ENCODE measurements at regions of chr9 and their contacts with region 1.

Region 1: DNA sequence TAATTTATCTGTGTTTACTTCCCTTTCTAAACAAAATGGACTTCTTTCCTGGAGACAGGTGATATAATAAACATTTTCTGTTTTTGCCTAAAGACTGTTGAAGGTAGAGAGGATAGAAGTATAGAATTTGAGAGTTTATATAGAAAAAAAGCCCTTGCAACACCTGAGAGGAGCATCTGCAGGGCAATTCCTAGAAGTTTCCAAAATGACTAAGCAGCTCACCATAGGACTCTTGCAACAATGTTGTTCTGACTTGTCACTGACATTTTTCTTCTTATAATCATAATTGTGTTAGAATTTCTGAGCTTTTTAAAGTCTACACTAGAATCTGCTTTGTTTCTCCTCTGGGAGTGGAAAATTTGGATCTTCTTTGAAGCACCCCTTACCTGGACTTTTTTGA is 216.8 kb downstream of the TUSC1 start:
- DNase-seq: no peak
- ATAC-seq: no peak
- H3K4me3 ChIP-seq: no peak overlapping the region
- H3K4me3 Mint-ChIP-seq: no peak overlapping the region
- H3K27ac ChIP-seq: no peak overlapping the region
- H3K27ac Mint-ChIP-seq: no peak overlapping the region
- H3K4me1 ChIP-seq: no peaks in the 10 kb centered on the region
- H3K4me1 Mint-ChIP-seq: no peaks in the 10 kb centered on the region
- H3K27me3 ChIP-seq: no peaks in the 10 kb centered on the region
- H3K27me3 Mint-ChIP-seq: no peaks in the 10 kb centered on the region

Region 2: DNA sequence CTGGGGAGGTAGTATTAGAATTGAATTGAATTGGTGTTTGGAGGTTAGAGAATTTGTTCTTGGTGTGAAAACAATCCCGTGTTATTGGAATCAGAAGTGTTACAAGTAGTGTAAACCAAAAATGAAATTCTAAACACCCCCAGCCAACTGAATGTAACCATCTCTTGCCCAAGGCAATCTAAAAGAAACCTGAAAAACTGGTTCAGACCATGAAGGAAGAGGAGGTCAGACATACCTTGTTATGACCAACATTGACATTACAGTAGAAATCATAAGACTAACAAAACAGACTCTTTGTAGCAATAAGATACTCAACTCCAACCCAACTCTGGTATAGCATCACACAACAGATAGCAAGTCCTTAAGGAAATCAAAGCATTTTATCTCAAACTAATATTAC is 57.9 kb after region 1 on chr9:
- CTCF ChIA-PET with region 1: no interaction called
- POLR2A ChIA-PET with region 1: no interaction called
- intact Hi-C with region 1: loop called in 1 of 2 experiments (anchors 10 kb)
- DNase-seq: no peak
- ATAC-seq: no peak
- H3K4me3 ChIP-seq: no peak overlapping the region
- H3K4me3 Mint-ChIP-seq: no peak overlapping the region
- H3K27ac ChIP-seq: no peak overlapping the region
- H3K27ac Mint-ChIP-seq: no peak overlapping the region
- H3K4me1 ChIP-seq: no peaks in the 10 kb centered on the region
- H3K4me1 Mint-ChIP-seq: no peaks in the 10 kb centered on the region
- H3K27me3 ChIP-seq: no peaks in the 10 kb centered on the region
- H3K27me3 Mint-ChIP-seq: no peaks in the 10 kb centered on the region

Region 3: DNA sequence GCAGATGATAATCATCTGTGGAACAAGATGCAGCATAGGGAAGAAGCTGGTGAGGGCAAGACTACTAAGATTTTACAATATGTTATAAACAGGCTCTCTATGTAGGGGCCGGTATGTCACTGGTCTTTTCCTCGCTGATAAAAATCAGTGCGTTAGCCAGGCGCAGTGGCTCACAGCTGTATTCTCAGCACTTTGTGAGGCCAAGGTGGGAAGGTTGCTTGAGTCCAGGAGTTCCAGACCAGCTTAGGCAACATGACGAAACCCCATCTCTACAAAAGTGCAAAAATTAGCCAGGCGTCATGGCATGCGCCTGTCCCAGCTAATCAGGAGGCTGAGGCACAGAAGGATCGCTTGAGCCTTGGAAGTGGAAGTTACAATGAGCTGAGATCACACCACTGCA is 80.9 kb after region 1 on chr9:
- CTCF ChIA-PET with region 1: no interaction called
- POLR2A ChIA-PET with region 1: no interaction called
- intact Hi-C with region 1: no loop called
- DNase-seq: no peak
- ATAC-seq: no peak
- H3K4me3 ChIP-seq: no peak overlapping the region
- H3K4me3 Mint-ChIP-seq: no peak overlapping the region
- H3K27ac ChIP-seq: no peak overlapping the region
- H3K27ac Mint-ChIP-seq: no peak overlapping the region
- H3K4me1 ChIP-seq: no peaks in the 10 kb centered on the region
- H3K4me1 Mint-ChIP-seq: no peaks in the 10 kb centered on the region
- H3K27me3 ChIP-seq: no peaks in the 10 kb centered on the region
- H3K27me3 Mint-ChIP-seq: no peaks in the 10 kb centered on the region

Measured in naive thymus-derived CD4-positive, alpha-beta T cell (primary cell).